ENCODE measurements at regions of chr5 and their contacts with region 1.

Region 1: GRCh38 chr5:6377905-6378765 is at the start of gene MED10:
- DNase-seq: peak; percentile 90 to 96 (median 95)
- ATAC-seq: peak; percentile 97
- H3K4me3 ChIP-seq: peak within 1 kb of the TSS; percentile 56 to 95
- H3K4me3 Mint-ChIP-seq: peak within 1 kb of the TSS; percentile 99
- H3K27ac ChIP-seq: peak within 1 kb of the TSS; percentile 77 to 90
- H3K27ac Mint-ChIP-seq: peak within 1 kb of the TSS; percentile 98
- H3K4me1 ChIP-seq: peaks cover 31% of the 10 kb centered on the region
- H3K4me1 Mint-ChIP-seq: peaks cover 47% of the 10 kb centered on the region
- H3K27me3 ChIP-seq: no peaks in the 10 kb centered on the region
- H3K27me3 Mint-ChIP-seq: no peaks in the 10 kb centered on the region
- CTCF ChIP-seq: no peak
- total RNA-seq, gene MED10: 110 to 112 TPM

Region 2: DNA sequence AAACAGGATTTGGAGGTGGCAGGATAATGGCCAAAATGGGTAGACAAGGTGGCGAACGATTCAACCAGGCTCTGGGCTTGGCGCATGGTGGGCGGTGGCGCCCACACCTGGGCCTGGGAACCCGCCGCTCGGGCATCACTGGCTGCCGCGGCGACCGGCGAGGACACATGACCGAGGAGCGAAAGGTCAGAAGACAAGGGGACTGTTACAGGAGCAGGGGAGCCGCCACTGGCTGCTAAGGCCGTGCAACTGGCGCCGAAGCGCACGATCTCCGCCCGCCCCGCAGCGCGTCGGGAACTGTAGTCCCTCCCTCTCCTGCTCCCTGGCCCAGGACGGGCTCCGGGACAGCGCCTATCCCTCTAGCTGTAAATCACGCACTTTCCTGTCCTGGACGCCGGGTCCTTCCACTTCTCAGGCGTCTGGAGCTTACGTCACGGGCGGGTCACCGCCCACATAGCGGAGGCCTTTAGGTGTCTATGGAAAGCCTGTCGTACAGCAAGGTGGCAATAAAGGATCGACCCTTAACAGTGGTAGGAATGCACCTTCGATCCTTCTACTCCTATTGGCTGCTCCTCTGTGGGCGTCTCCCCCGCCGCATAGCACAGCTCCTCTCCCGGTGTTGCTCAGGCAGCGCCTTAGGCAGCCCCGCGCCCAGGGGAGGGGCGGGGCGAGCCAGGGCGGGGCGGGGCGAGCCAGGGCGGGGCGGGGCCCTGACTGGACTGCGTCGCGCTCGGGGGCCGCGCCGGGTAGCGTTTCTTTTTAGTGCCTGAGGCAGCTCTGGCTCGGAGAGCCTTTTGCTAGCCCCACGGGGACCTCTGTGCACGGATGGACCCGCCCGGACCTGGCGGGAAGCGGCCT is 955.9 kb before region 1 on chr5 and contains the start of gene ICE1:
- CTCF ChIA-PET with region 1: no interaction called
- POLR2A ChIA-PET with region 1: interaction called, 3 read pairs
- intact Hi-C with region 1: loop called in 1 of 2 experiments (anchors 1 kb)
- DNase-seq: peak; percentile 91 to 98 (median 94)
- ATAC-seq: peak; percentile 87
- H3K4me3 ChIP-seq: peak within 1 kb of the TSS; percentile 78 to 84
- H3K4me3 Mint-ChIP-seq: no peak within 1 kb of the TSS
- H3K27ac ChIP-seq: peak within 1 kb of the TSS; percentile 96 to 99
- H3K27ac Mint-ChIP-seq: peak within 1 kb of the TSS; percentile 99
- H3K4me1 ChIP-seq: peaks cover 42% of the 10 kb centered on the region
- H3K4me1 Mint-ChIP-seq: peaks cover 18% of the 10 kb centered on the region
- H3K27me3 ChIP-seq: no peaks in the 10 kb centered on the region
- H3K27me3 Mint-ChIP-seq: no peaks in the 10 kb centered on the region
- CTCF ChIP-seq: no peak
- total RNA-seq, gene ICE1: 48.3 to 52.8 TPM

Region 3: GRCh38 chr5:5523066-5523505 is 855.0 kb before region 1 on chr5:
- CTCF ChIA-PET with region 1: no interaction called
- POLR2A ChIA-PET with region 1: no interaction called
- intact Hi-C with region 1: loop called in 1 of 2 experiments (anchors 5 kb)
- DNase-seq: peak in 3 of 9 experiments; percentile 13 to 85 (median 74)
- ATAC-seq: peak; percentile 77
- H3K4me3 ChIP-seq: peak overlapping the region in 1 of 2 experiments; percentile 27
- H3K4me3 Mint-ChIP-seq: peak overlapping the region; percentile 78
- H3K27ac ChIP-seq: peak overlapping the region in 1 of 2 experiments; percentile 25
- H3K27ac Mint-ChIP-seq: peak overlapping the region; percentile 22
- H3K4me1 ChIP-seq: peaks cover 7% of the 10 kb centered on the region
- H3K4me1 Mint-ChIP-seq: peaks cover 12% of the 10 kb centered on the region
- H3K27me3 ChIP-seq: no peaks in the 10 kb centered on the region
- H3K27me3 Mint-ChIP-seq: peaks cover 2% of the 10 kb centered on the region
- CTCF ChIP-seq: no peak

Region 4: GRCh38 chr5:6359555-6360322 is 18.4 kb before region 1 on chr5:
- CTCF ChIA-PET with region 1: interaction called, 6 read pairs
- POLR2A ChIA-PET with region 1: interaction called, 7 read pairs
- intact Hi-C with region 1: loop called in 1 of 2 experiments (anchors 1 kb)
- DNase-seq: peak in 3 of 9 experiments; percentile 27 to 62 (median 35)
- ATAC-seq: peak; percentile 77
- H3K4me3 ChIP-seq: peak overlapping the region in 1 of 2 experiments; percentile 3
- H3K4me3 Mint-ChIP-seq: peak overlapping the region; percentile 59
- H3K27ac ChIP-seq: peak overlapping the region; percentile 13 to 46
- H3K27ac Mint-ChIP-seq: peak overlapping the region; percentile 89
- H3K4me1 ChIP-seq: peaks cover 20% of the 10 kb centered on the region
- H3K4me1 Mint-ChIP-seq: peaks cover 17% of the 10 kb centered on the region
- H3K27me3 ChIP-seq: no peaks in the 10 kb centered on the region
- H3K27me3 Mint-ChIP-seq: no peaks in the 10 kb centered on the region
- CTCF ChIP-seq: no peak

Region 5: GRCh38 chr5:6540111-6540827 is 162.1 kb after region 1 on chr5:
- CTCF ChIA-PET with region 1: no interaction called
- POLR2A ChIA-PET with region 1: no interaction called
- intact Hi-C with region 1: no loop called
- DNase-seq: peak in 1 of 9 experiments; percentile 38
- ATAC-seq: no peak
- H3K4me3 ChIP-seq: no peak overlapping the region
- H3K4me3 Mint-ChIP-seq: no peak overlapping the region
- H3K27ac ChIP-seq: no peak overlapping the region
- H3K27ac Mint-ChIP-seq: no peak overlapping the region
- H3K4me1 ChIP-seq: no peaks in the 10 kb centered on the region
- H3K4me1 Mint-ChIP-seq: no peaks in the 10 kb centered on the region
- H3K27me3 ChIP-seq: no peaks in the 10 kb centered on the region
- H3K27me3 Mint-ChIP-seq: peaks cover 18% of the 10 kb centered on the region
- CTCF ChIP-seq: no peak

Region 6: GRCh38 chr5:6632917-6633468 is 254.9 kb after region 1 on chr5 and contains the starts of genes NSUN2 and SRD5A1:
- CTCF ChIA-PET with region 1: no interaction called
- POLR2A ChIA-PET with region 1: interaction called, 8 read pairs
- intact Hi-C with region 1: loop called (anchors 1 kb)
- DNase-seq: peak; percentile 81 to 98 (median 90)
- ATAC-seq: peak; percentile 89
- H3K4me3 ChIP-seq: peak within 1 kb of the TSS; percentile 75 to 83
- H3K4me3 Mint-ChIP-seq: peak within 1 kb of the TSS; percentile 85
- H3K27ac ChIP-seq: peak within 1 kb of the TSS; percentile 92 to 100
- H3K27ac Mint-ChIP-seq: peak within 1 kb of the TSS; percentile 99
- H3K4me1 ChIP-seq: peaks cover 22% of the 10 kb centered on the region
- H3K4me1 Mint-ChIP-seq: peaks cover 52% of the 10 kb centered on the region
- H3K27me3 ChIP-seq: no peaks in the 10 kb centered on the region
- H3K27me3 Mint-ChIP-seq: no peaks in the 10 kb centered on the region
- CTCF ChIP-seq: no peak
- total RNA-seq, gene NSUN2: 69.6 to 74.3 TPM
- total RNA-seq, gene SRD5A1: 2.1 to 2.8 TPM

Region 7: DNA sequence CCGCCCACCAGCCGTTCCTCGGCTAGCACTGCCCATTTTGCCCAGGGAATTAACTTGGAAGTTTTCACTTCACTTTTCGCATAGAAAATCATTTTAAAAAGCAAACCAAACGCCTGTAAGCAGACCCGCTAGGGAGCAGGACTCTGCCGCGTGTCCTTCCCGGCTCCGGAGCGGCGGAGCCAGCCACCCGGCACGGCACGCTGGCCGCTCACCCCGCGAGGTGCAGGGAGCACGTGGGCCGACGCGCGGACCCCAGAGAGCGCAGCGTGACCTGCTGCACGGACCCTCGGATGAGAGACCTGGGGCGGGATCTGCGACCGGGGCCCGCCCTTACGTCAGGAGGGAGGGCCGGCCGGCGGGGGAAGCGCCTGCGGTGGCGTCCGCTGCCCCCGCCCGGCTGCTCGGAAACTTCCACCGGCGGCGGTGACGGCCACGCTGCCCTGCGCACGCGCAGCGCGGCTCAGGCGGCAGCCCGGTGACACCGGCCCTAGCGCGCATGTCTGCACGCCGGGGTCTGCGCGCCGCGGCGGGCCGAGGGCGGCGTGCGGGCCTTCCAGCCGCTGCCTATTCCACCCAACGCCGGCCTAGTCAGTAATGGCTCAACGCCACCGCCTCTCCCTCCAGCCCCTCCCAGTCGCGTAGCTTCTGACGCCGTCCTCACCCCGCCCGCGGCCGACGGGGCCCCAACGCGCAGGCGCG is 334.6 kb after region 1 on chr5:
- CTCF ChIA-PET with region 1: no interaction called
- POLR2A ChIA-PET with region 1: no interaction called
- intact Hi-C with region 1: loop called in 1 of 2 experiments (anchors 2 kb)
- DNase-seq: peak in 8 of 9 experiments; percentile 95 to 99 (median 96)
- ATAC-seq: peak; percentile 76
- H3K4me3 ChIP-seq: peak overlapping the region; percentile 83 to 91
- H3K4me3 Mint-ChIP-seq: peak overlapping the region; percentile 89
- H3K27ac ChIP-seq: peak overlapping the region; percentile 77 to 86
- H3K27ac Mint-ChIP-seq: peak overlapping the region; percentile 92
- H3K4me1 ChIP-seq: peaks cover 28% of the 10 kb centered on the region
- H3K4me1 Mint-ChIP-seq: peaks cover 39% of the 10 kb centered on the region
- H3K27me3 ChIP-seq: peaks cover 0 to 2% of the 10 kb centered on the region in 2 experiments
- H3K27me3 Mint-ChIP-seq: no peaks in the 10 kb centered on the region
- CTCF ChIP-seq: no peak

Region 8: GRCh38 chr5:7868773-7869473 is 1490.8 kb after region 1 on chr5 and contains the starts of genes FASTKD3 and MTRR:
- CTCF ChIA-PET with region 1: no interaction called
- POLR2A ChIA-PET with region 1: no interaction called
- intact Hi-C with region 1: loop called in 1 of 2 experiments (anchors 5 kb)
- DNase-seq: peak; percentile 77 to 95 (median 90)
- ATAC-seq: peak; percentile 99
- H3K4me3 ChIP-seq: peak within 1 kb of the TSS; percentile 82 to 90
- H3K4me3 Mint-ChIP-seq: peak within 1 kb of the TSS; percentile 99
- H3K27ac ChIP-seq: peak within 1 kb of the TSS; percentile 67 to 70
- H3K27ac Mint-ChIP-seq: peak within 1 kb of the TSS; percentile 93
- H3K4me1 ChIP-seq: peaks cover 43% of the 10 kb centered on the region
- H3K4me1 Mint-ChIP-seq: peaks cover 71% of the 10 kb centered on the region
- H3K27me3 ChIP-seq: no peaks in the 10 kb centered on the region
- H3K27me3 Mint-ChIP-seq: no peaks in the 10 kb centered on the region
- CTCF ChIP-seq: no peak
- total RNA-seq, gene FASTKD3: 4.3 to 7.1 TPM
- total RNA-seq, gene MTRR: 67.8 to 76.8 TPM

Measured in CD8-positive, alpha-beta T cell (primary cell).